ENCODE measurements at regions of chr7 and their contacts with region 1.

Region 1: GRCh38 chr7:134632937-134633540 is 13.6 kb upstream of the BPGM start:
- DNase-seq: peak; percentile 66
- ATAC-seq: peak; percentile 68
- H3K4me3 ChIP-seq: no peak overlapping the region
- H3K4me3 Mint-ChIP-seq: no peak overlapping the region
- H3K27ac ChIP-seq: no peak overlapping the region
- H3K27ac Mint-ChIP-seq: no peak overlapping the region
- H3K4me1 ChIP-seq: peaks cover 0 to 3% of the 10 kb centered on the region in 2 donors
- H3K4me1 Mint-ChIP-seq: peaks cover 10% of the 10 kb centered on the region
- H3K27me3 ChIP-seq: peaks cover 0 to 13% (median 3%) of the 10 kb centered on the region in 4 experiments
- H3K27me3 Mint-ChIP-seq: peaks cover 30% of the 10 kb centered on the region
- CTCF ChIP-seq: peak; percentile 79

Region 2: DNA sequence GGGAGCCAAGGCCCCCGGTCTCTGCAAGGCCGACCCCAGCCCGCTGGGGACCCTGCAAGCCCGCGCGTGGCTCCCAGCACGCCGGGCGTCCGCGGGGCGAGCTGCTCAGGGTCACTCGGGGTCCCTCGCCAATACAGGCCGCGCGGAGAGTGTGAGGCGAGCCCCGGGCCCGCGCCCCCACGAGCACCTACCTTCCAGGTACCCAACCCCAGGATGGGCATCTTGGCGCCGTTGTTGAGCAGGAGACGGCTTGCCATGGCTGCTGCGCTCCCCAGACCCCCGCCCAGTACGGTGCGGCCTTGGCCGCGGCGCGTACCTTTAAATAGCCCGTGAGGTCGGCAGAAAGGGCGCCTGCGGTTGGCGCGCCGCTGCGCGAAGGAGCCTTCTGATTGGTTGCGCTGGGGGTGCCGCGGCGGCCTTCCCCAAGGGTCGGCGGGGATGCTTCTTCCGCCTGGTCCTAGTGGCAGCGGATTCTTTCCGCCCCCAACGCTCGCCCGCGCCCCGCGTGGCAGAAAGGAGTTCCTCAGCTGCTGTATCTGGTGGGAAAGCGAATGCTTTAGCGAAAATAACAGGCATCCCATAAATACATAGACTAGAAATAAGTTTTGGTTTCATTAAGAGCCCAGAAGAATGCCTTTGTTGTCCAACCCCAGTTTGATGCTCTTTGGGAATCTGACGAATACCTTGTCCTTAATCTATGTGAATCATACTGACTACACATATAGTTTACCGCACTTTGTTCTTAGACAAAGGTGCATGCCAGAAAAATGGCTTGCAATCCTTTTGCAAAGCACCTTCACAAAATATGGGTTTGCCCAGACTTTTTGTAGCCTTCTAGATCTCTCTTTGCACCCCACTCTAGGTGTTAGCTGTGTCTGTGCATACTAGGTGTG is 174.0 kb before region 1 on chr7 and contains the start of gene AKR1B1:
- CTCF ChIA-PET with region 1: no interaction called
- POLR2A ChIA-PET with region 1: no interaction called
- intact Hi-C with region 1: no loop called
- DNase-seq: peak; percentile 94
- ATAC-seq: peak; percentile 89
- H3K4me3 ChIP-seq: peak within 1 kb of the TSS; percentile 42 to 90 (median 84)
- H3K4me3 Mint-ChIP-seq: peak within 1 kb of the TSS; percentile 92
- H3K27ac ChIP-seq: peak within 1 kb of the TSS; percentile 53 to 79
- H3K27ac Mint-ChIP-seq: peak within 1 kb of the TSS; percentile 91
- H3K4me1 ChIP-seq: peaks cover 22 to 24% of the 10 kb centered on the region in 2 donors
- H3K4me1 Mint-ChIP-seq: peaks cover 47% of the 10 kb centered on the region
- H3K27me3 ChIP-seq: peaks cover 0 to 3% (median 0%) of the 10 kb centered on the region in 4 experiments
- H3K27me3 Mint-ChIP-seq: no peaks in the 10 kb centered on the region
- CTCF ChIP-seq: peak; percentile 77
- total RNA-seq, gene AKR1B1: 89.6 and 94.7 TPM in 2 replicates

Region 3: DNA sequence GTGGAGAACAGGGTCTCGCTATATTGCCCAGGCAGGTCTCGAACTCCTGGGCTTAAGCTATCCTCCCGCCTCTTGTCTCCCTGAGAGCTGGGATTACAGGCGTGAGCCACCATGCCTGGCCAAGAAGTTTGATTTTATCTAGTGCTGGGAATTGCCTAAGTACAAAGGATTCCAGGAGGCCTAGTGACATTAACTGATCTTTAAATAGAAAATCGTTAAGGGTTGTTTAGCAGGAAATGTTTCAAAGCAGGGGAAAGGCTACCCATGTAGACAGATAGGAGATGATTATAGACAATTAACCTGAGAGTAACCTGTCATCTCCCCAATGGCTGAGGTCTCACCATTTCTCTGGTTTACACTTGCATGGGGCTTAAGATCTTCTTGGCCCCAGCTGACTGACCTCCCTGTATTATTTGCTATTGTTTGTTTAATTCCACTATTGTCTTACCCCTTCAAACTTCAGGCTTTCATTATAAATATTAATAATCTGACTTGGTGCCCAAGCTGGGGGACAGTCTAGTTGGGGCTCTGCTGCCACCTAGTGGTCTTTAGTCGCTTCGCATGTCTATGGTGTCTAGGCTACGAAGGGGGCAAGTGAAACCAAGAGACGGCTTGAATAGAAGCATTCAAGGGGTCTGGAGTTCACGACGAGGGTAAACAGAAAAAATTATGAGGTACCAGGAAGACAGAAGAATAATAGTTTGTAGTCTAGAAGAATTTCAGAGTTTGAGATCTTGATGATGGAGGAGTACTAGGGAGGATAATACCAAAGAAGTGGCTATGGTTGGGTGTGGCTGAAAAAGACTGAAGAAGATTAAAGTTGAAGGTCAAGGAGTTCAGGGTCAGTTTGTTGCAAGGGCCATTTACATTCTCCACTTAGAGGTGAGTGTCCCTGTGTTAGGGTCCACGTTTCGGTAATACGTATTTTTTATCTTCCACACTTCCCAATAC is 26.8 kb before region 1 on chr7:
- CTCF ChIA-PET with region 1: interaction called, 12 read pairs
- POLR2A ChIA-PET with region 1: no interaction called
- intact Hi-C with region 1: no loop called
- DNase-seq: peak; percentile 72
- ATAC-seq: peak; percentile 71
- H3K4me3 ChIP-seq: no peak overlapping the region
- H3K4me3 Mint-ChIP-seq: no peak overlapping the region
- H3K27ac ChIP-seq: no peak overlapping the region
- H3K27ac Mint-ChIP-seq: no peak overlapping the region
- H3K4me1 ChIP-seq: peaks cover 0 to 3% of the 10 kb centered on the region in 2 donors
- H3K4me1 Mint-ChIP-seq: peaks cover 3% of the 10 kb centered on the region
- H3K27me3 ChIP-seq: peaks cover 0 to 13% (median 2%) of the 10 kb centered on the region in 4 experiments
- H3K27me3 Mint-ChIP-seq: peaks cover 43% of the 10 kb centered on the region
- CTCF ChIP-seq: peak; percentile 94

Region 4: DNA sequence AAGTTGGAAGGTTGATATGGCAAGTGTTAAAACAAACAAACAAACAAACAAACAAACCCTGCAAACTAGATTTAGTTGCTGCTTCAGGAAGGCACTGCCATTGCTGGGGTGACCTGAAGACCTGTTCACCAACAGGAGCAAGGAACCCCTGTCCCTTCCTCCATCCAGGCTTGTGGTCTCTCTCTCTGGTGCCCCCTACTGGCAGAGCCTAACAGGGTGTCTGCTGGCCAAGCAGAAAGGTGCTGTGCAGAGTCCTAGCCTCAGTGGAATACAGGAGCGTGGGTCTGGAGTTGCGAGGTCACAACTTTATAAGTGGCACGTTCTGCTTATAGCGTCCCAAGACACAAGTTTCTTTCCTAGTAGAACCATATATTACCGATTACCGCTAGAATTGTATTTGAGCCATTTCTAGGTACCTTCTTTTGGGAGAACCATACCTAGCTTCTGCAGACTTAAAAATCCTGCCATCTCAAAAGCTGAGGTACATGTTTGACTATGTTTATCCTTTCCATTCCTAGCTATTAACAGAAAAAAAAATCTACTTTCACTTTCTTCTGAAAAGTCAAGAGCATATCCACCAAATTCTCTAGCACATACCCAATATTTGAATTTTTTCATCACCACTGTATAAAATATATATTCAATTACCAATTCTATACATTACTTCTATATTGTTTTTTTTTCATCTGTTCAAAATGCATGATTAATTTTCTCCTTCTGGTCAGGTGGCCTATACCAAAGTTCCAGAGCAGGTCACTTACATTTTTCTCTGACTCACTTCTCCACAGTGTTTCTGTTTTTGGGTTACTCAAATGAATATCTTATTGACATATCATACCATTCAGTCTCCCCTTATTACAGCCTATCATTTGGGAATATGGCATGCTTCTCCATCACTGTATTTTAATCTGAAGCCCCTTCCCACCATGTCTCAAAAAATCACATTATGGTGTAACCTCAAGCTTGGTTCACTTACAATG is 117.3 kb after region 1 on chr7:
- CTCF ChIA-PET with region 1: interaction called, 15 read pairs
- POLR2A ChIA-PET with region 1: no interaction called
- intact Hi-C with region 1: loop called (anchors 5 kb)
- DNase-seq: peak; percentile 50
- ATAC-seq: peak; percentile 53
- H3K4me3 ChIP-seq: no peak overlapping the region
- H3K4me3 Mint-ChIP-seq: no peak overlapping the region
- H3K27ac ChIP-seq: no peak overlapping the region
- H3K27ac Mint-ChIP-seq: no peak overlapping the region
- H3K4me1 ChIP-seq: no peaks in the 10 kb centered on the region
- H3K4me1 Mint-ChIP-seq: no peaks in the 10 kb centered on the region
- H3K27me3 ChIP-seq: no peaks in the 10 kb centered on the region
- H3K27me3 Mint-ChIP-seq: peaks cover 4% of the 10 kb centered on the region
- CTCF ChIP-seq: peak; percentile 70

Region 5: GRCh38 chr7:134943764-134944400 is 310.8 kb after region 1 on chr7:
- CTCF ChIA-PET with region 1: interaction called, 106 read pairs
- POLR2A ChIA-PET with region 1: no interaction called
- intact Hi-C with region 1: no loop called
- DNase-seq: peak; percentile 36
- ATAC-seq: peak; percentile 33
- H3K4me3 ChIP-seq: no peak overlapping the region
- H3K4me3 Mint-ChIP-seq: no peak overlapping the region
- H3K27ac ChIP-seq: no peak overlapping the region
- H3K27ac Mint-ChIP-seq: no peak overlapping the region
- H3K4me1 ChIP-seq: no peaks in the 10 kb centered on the region
- H3K4me1 Mint-ChIP-seq: no peaks in the 10 kb centered on the region
- H3K27me3 ChIP-seq: no peaks in the 10 kb centered on the region
- H3K27me3 Mint-ChIP-seq: peaks cover 3% of the 10 kb centered on the region
- CTCF ChIP-seq: peak; percentile 32

Region 6: DNA sequence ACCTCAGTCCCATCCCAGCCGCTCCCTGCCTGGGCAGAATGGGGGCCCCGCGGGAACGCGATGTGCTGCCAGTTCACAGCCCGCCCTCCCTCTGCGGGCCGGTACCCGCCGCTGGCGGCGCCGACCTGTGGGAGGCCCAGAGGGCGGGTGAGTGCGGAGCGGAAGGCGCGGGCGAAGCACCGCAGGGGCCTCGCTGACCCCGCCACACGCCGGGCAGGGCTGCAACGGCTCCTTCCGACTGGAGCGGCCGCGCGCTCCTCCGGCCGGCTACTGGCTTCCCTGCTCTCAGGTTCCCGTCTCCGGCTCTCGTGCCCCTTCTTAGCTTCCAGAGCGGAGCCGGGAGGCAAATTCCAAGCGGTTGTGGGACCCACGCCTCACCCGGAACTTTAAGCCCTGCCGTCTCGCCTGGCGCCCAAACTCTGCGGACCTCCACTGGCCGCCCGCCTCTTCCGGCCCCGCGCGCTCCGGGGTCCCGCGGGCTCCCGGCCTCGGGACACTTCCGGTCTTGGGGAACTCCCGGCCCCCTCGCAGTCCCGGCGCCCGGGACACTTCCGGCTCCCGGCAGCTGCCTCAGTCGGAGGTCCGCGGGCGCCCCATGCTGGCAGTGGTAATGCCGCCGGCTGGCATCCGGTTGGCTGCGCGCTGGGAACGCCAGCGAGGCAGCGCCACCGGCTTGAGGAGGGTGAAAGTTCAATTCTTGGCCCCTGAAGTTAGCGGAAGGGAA is 537.4 kb after region 1 on chr7 and contains the start of gene CYREN:
- CTCF ChIA-PET with region 1: interaction called, 18 read pairs
- POLR2A ChIA-PET with region 1: no interaction called
- intact Hi-C with region 1: loop called (anchors 5 kb)
- DNase-seq: peak; percentile 92
- ATAC-seq: peak; percentile 77
- H3K4me3 ChIP-seq: peak within 1 kb of the TSS; percentile 72 to 93 (median 83)
- H3K4me3 Mint-ChIP-seq: peak within 1 kb of the TSS; percentile 94
- H3K27ac ChIP-seq: peak within 1 kb of the TSS; percentile 96 to 97
- H3K27ac Mint-ChIP-seq: peak within 1 kb of the TSS; percentile 93
- H3K4me1 ChIP-seq: peaks cover 22 to 42% of the 10 kb centered on the region in 2 donors
- H3K4me1 Mint-ChIP-seq: peaks cover 60% of the 10 kb centered on the region
- H3K27me3 ChIP-seq: no peaks in the 10 kb centered on the region
- H3K27me3 Mint-ChIP-seq: no peaks in the 10 kb centered on the region
- CTCF ChIP-seq: peak; percentile 77
- total RNA-seq, gene CYREN: 51.6 and 54.6 TPM in 2 replicates

Measured in B cell (primary cell).